PC-3 (cell line): ENCODE measurements at regions of chr5 and their contacts with region 1.

Region 1: GRCh38 chr5:35651002-35651756 is 33.5 kb downstream of the SPEF2 start:
- DNase-seq: peak; percentile 82
- ATAC-seq: peak; percentile 99
- H3K4me3 ChIP-seq: no peak overlapping the region
- H3K27ac ChIP-seq: no peak overlapping the region
- H3K4me1 ChIP-seq: no peaks in the 10 kb centered on the region
- H3K27me3 ChIP-seq: no peaks in the 10 kb centered on the region
- CTCF ChIP-seq: peak; percentile 88

Region 2: DNA sequence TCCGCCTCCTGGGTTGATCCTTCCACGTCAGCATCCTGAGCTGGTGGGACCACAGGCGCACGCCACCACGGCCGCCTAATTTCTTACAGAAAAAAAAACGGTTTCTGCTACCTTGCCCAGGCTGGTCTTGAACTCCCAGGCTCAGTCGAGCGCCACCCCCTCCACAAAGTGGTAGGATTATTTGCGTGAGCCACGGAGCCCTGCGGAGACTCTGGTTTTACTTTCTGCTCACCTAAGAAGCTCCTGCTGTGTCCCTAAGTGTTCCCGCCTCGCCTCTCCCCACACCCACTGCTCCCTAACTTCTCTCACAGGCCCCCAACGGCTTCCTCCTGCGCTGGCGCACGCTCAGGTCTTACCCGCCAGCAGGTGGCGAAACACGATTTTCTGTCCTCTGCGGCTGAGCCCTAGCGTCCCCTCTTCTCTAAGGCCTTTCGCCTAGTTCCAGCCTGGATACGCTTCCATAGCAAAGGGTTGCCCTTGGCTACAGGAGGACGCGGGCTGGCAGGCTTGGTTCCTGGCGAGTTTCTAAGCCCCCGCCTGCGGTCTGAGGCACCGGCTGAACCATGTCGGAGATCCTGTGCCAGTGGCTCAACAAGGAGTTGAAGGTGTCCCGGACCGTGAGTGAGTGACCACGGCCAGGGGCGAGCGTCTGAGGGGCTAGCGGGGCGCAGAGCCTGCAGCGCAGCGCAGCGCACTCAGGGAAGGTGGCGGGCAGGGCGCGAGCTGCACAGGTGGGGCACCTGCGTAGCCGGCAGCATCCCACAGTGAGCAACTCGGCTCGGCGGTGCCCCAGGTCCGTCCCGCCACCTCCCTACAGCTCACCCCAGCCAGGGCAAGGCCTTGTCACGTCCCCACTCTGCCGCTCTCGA is 33.5 kb before region 1 on chr5 and contains the start of gene SPEF2:
- CTCF ChIA-PET with region 1: no interaction called
- POLR2A ChIA-PET with region 1: no interaction called
- intact Hi-C with region 1: loop called (anchors 2 kb)
- DNase-seq: peak; percentile 92
- ATAC-seq: peak; percentile 98
- H3K4me3 ChIP-seq: peak within 1 kb of the TSS; percentile 92
- H3K27ac ChIP-seq: no peak within 1 kb of the TSS
- H3K4me1 ChIP-seq: peaks cover 9% of the 10 kb centered on the region
- H3K27me3 ChIP-seq: no peaks in the 10 kb centered on the region
- CTCF ChIP-seq: peak; percentile 91
- total RNA-seq, gene SPEF2: 2.3 and 2.7 TPM in 2 replicates

Region 3: DNA sequence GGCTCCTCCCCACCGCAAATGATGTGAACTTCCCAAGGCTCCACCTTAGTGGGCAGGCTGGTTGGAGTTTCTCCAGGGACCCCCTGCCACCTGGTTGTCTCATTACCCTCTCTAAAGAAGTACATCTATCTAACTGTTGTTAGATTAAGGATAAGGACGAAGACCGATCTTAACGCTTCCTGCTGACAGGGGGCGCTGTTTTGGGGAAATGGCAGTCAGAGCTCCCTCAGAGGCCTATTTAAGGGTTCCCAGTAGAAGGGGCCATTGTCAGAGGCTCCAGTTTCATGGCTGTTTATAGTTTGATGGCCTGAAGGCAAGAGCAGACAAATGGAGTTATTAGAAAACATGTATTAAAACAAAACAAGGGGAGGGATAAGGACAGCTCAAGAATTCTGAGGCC is 66.5 kb after region 1 on chr5:
- CTCF ChIA-PET with region 1: no interaction called
- POLR2A ChIA-PET with region 1: no interaction called
- intact Hi-C with region 1: loop called (anchors 2 kb)
- DNase-seq: no peak
- ATAC-seq: no peak
- H3K4me3 ChIP-seq: no peak overlapping the region
- H3K27ac ChIP-seq: no peak overlapping the region
- H3K4me1 ChIP-seq: no peaks in the 10 kb centered on the region
- H3K27me3 ChIP-seq: no peaks in the 10 kb centered on the region
- CTCF ChIP-seq: no peak